ENCODE measurements at regions of chr17 and their contacts with region 1.

Region 1: GRCh38 chr17:30808785-30809286 is 15.7 kb downstream of the CRLF3 start:
- DNase-seq: peak; percentile 55
- ATAC-seq: peak; percentile 89
- H3K4me3 Mint-ChIP-seq: peak overlapping the region; percentile 92
- H3K27ac Mint-ChIP-seq: peak overlapping the region; percentile 98
- H3K4me1 Mint-ChIP-seq: peaks cover 61% of the 10 kb centered on the region
- H3K27me3 Mint-ChIP-seq: no peaks in the 10 kb centered on the region

Region 2: DNA sequence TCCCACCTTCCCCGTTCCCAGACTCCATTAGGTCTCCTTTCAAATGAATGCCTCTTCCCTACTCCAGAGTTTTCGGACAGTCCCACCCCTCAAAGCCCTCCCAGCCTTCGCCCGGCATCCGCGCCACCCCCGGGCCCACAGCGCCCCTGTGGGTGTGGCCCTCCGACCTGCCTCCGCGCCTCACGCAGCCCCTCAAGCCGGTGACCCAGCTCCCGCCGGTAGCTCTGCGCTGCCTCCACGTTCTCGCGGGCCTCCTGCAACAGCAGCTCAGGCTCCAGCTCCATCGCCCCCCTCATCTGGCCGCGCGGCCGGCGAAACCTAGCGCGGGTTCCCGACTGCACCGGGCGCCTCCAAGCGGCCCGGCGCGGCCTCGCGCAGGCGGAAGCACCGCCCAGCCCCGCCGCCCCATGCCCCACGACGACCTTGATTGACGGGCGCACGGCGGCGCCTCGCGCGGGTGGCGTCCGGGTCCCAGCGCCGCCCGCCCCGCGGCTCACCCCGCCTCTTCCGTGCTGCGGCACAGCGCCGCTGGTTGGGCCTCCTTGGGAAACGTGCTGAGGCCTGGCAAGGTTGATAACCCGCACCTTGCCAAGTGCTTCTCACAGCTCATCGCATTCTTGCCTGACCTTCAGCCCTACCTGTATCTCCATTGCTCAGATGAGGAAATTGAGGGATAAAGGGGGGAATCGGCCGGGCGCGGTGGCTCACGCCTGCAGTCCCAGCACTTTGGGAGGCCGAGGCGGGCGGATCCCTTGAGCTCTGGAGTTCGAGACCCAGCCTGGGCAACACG is 15.7 kb after region 1 on chr17 and contains the start of gene CRLF3:
- POLR2A ChIA-PET with region 1: interaction called, 322 read pairs
- DNase-seq: peak; percentile 95
- ATAC-seq: peak; percentile 96
- H3K4me3 Mint-ChIP-seq: peak within 1 kb of the TSS; percentile 91
- H3K27ac Mint-ChIP-seq: peak within 1 kb of the TSS; percentile 90
- H3K4me1 Mint-ChIP-seq: peaks cover 34% of the 10 kb centered on the region
- H3K27me3 Mint-ChIP-seq: no peaks in the 10 kb centered on the region
- total RNA-seq, gene CRLF3: 77.2 to 79.5 TPM

Region 3: GRCh38 chr17:30831663-30832437 is 23.0 kb after region 1 on chr17 and contains the start of gene ATAD5:
- POLR2A ChIA-PET with region 1: interaction called, 322 read pairs
- DNase-seq: peak; percentile 92
- ATAC-seq: peak; percentile 93
- H3K4me3 Mint-ChIP-seq: peak within 1 kb of the TSS; percentile 99
- H3K27ac Mint-ChIP-seq: peak within 1 kb of the TSS; percentile 97
- H3K4me1 Mint-ChIP-seq: peaks cover 31% of the 10 kb centered on the region
- H3K27me3 Mint-ChIP-seq: no peaks in the 10 kb centered on the region
- total RNA-seq, gene ATAD5: 25.8 to 29.7 TPM

Measured in activated naive CD8-positive, alpha-beta T cell treated with anti-CD3 and anti-CD28 coated beads, Interleukin-2, amount 10 ng/mL, durations not matched to agents 7 days and 5 days (primary cell).